Activated CD8-positive, alpha-beta T cell treated with anti-CD3 and anti-CD28 coated beads for 36 hours (primary cell): ENCODE measurements at regions of chrX and their contacts with region 1.

Region 1: GRCh38 chrX:119468930-119469635 is 839 bp downstream of the SLC25A5 start:
- DNase-seq: peak; percentile 92
- ATAC-seq: peak; percentile 81
- H3K4me3 Mint-ChIP-seq: peak overlapping the region; percentile 83
- H3K27ac Mint-ChIP-seq: peak overlapping the region; percentile 91
- H3K4me1 Mint-ChIP-seq: peaks cover 12% of the 10 kb centered on the region
- H3K27me3 Mint-ChIP-seq: no peaks in the 10 kb centered on the region
- CTCF ChIP-seq: peak; percentile 65

Region 2: DNA sequence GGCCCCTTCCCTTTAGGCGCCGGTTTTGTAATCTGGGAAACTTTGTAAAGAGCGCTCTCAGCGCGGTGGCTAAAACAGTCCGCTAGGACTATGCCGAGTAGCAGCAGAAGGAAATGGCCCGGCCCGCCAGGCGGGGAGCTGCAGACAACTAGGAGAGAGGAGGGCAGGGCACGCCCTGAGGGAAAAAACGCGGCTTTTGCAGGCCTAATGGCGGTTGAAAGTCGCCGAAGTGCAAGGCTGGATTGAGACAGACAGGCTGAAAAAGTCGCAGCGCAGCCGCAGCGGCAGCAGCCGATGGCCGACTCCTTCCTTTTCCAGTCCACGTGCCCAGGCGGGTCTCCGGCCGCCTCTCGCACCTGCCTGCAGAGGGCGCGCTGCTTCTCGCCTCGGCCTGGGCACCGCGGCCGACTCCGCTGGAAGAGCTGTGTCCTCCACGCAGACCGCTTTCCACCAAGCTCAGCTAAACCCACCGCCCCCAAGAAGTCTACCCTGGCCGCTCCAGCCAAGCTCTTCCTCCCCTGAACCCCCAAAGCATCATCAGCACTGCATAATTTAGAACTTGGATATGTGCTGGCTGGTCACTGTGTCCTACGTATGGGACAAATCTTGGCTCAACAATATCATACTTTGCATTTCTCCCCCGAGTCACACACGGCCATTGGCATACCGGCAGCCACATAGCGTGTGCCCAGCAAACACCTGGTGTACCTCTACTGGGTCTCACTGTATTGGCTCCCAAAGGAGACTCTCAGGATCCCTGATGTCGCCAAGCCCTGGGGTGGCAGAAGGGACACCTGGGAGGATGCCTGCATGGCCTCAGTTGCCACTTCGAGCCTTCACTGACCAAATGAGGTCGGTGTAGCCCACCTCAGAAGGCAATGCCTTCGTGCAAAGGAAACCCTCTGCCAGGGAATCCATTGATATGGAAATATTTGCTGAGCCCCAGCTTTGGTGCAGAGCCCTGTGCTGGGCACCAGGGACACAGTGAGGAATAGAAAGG is 13.7 kb after region 1 on chrX:
- CTCF ChIA-PET with region 1: interaction called, 21 read pairs
- POLR2A ChIA-PET with region 1: interaction called, 20 read pairs
- intact Hi-C with region 1: no loop called
- DNase-seq: peak; percentile 73
- ATAC-seq: peak; percentile 89
- H3K4me3 Mint-ChIP-seq: peak overlapping the region; percentile 66
- H3K27ac Mint-ChIP-seq: peak overlapping the region; percentile 55
- H3K4me1 Mint-ChIP-seq: peaks cover 4% of the 10 kb centered on the region
- H3K27me3 Mint-ChIP-seq: no peaks in the 10 kb centered on the region
- CTCF ChIP-seq: peak; percentile 66